ENCODE measurements at regions of chr4 and their contacts with region 1.

Region 1: GRCh38 chr4:78951862-78952472 is 12.7 kb upstream of the PAQR3 start:
- DNase-seq: no peak
- H3K4me3 ChIP-seq: no peak overlapping the region
- H3K27ac ChIP-seq: no peak overlapping the region
- H3K4me1 ChIP-seq: no peaks in the 10 kb centered on the region
- H3K27me3 ChIP-seq: no peaks in the 10 kb centered on the region
- CTCF ChIP-seq: peak; percentile 77

Region 2: GRCh38 chr4:80215449-80216052 is 1263.6 kb after region 1 on chr4:
- intact Hi-C with region 1: loop called (anchors 10 kb)
- DNase-seq: no peak
- H3K4me3 ChIP-seq: no peak overlapping the region
- H3K27ac ChIP-seq: no peak overlapping the region
- H3K4me1 ChIP-seq: no peaks in the 10 kb centered on the region
- H3K27me3 ChIP-seq: peaks cover 39% of the 10 kb centered on the region
- CTCF ChIP-seq: peak; percentile 81

Measured in left ventricle myocardium inferior (tissue), 1 donor.